GM12878 (cell line): ENCODE measurements at regions of chr7 and their contacts with region 1.

Region 1: GRCh38 chr7:107917763-107918651 is 27.0 kb downstream of the DLD start:
- DNase-seq: no peak
- ATAC-seq: peak; percentile 85
- H3K4me3 ChIP-seq: no peak overlapping the region
- H3K27ac ChIP-seq: peak overlapping the region; percentile 15; the same call in 1 of the 2 replicates
- H3K4me1 ChIP-seq: peaks cover 13% of the 10 kb centered on the region
- H3K27me3 ChIP-seq: no peaks in the 10 kb centered on the region
- CTCF ChIP-seq: no peak
- EP300 ChIP-seq: no peak
- POLR2A ChIP-seq: no peak
- RAD21 ChIP-seq: no peak

Region 2: GRCh38 chr7:107865956-107866775 is 51.8 kb before region 1 on chr7:
- CTCF ChIA-PET with region 1: no interaction called
- POLR2A ChIA-PET with region 1: no interaction called
- RAD21 ChIA-PET with region 1: no interaction called
- SMC1A ChIA-PET with region 1: no interaction called
- in situ Hi-C with region 1: no loop called
- intact Hi-C with region 1: no loop called
- DNase-seq: no peak
- ATAC-seq: no peak
- H3K4me3 ChIP-seq: no peak overlapping the region
- H3K27ac ChIP-seq: no peak overlapping the region
- H3K4me1 ChIP-seq: no peaks in the 10 kb centered on the region
- H3K27me3 ChIP-seq: no peaks in the 10 kb centered on the region; a peak in 1 of 4 replicates
- CTCF ChIP-seq: no peak
- EP300 ChIP-seq: no peak
- POLR2A ChIP-seq: no peak
- RAD21 ChIP-seq: no peak

Region 3: GRCh38 chr7:107933386-107934013 is 15.5 kb after region 1 on chr7:
- CTCF ChIA-PET with region 1: interaction called, 3 read pairs
- POLR2A ChIA-PET with region 1: no interaction called
- RAD21 ChIA-PET with region 1: no interaction called
- SMC1A ChIA-PET with region 1: interaction called, 11 read pairs
- in situ Hi-C with region 1: no loop called
- intact Hi-C with region 1: no loop called
- DNase-seq: no peak
- ATAC-seq: no peak
- H3K4me3 ChIP-seq: no peak overlapping the region
- H3K27ac ChIP-seq: no peak overlapping the region
- H3K4me1 ChIP-seq: no peaks in the 10 kb centered on the region
- H3K27me3 ChIP-seq: no peaks in the 10 kb centered on the region
- CTCF ChIP-seq: no peak
- EP300 ChIP-seq: no peak
- POLR2A ChIP-seq: no peak
- RAD21 ChIP-seq: no peak